Activated CD8-positive, alpha-beta memory T cell treated with anti-CD3 and anti-CD28 coated beads, Interleukin-2, amount 10 ng/mL, durations not matched to agents 7 days and 5 days (primary cell): ENCODE measurements at regions of chr1 and their contacts with region 1.

Region 1: GRCh38 chr1:109773146-109773899 is 9.6 kb upstream of the EPS8L3 start:
- DNase-seq: peak; percentile 87
- ATAC-seq: peak; percentile 88
- H3K4me3 Mint-ChIP-seq: no peak overlapping the region
- H3K27ac Mint-ChIP-seq: no peak overlapping the region
- H3K4me1 Mint-ChIP-seq: peaks cover 8% of the 10 kb centered on the region
- H3K27me3 Mint-ChIP-seq: peaks cover 3% of the 10 kb centered on the region

Region 2: GRCh38 chr1:109598655-109599054 is 174.7 kb before region 1 on chr1:
- CTCF ChIA-PET with region 1: no interaction called
- DNase-seq: no peak
- ATAC-seq: no peak
- H3K4me3 Mint-ChIP-seq: no peak overlapping the region
- H3K27ac Mint-ChIP-seq: no peak overlapping the region
- H3K4me1 Mint-ChIP-seq: no peaks in the 10 kb centered on the region
- H3K27me3 Mint-ChIP-seq: no peaks in the 10 kb centered on the region

Region 3: DNA sequence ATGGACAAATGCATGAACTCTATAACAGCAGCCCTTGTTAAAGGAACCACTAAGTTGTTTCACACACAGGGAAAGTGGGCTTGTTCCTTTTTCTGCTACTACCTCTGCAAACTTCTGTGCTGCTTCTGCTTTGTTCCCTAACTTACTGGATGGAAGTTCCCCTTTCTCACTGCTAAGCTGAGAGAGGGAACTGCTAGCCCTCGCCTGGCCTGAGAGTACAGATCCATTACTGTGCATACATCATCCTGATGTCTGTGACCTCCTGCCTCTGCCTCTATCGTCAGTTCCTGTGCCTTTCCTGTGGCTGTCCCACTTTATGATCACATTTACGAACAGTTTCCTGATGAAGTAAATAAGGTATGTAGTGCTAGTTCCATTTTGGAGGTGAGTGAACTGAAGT is 157.4 kb before region 1 on chr1:
- CTCF ChIA-PET with region 1: no interaction called
- DNase-seq: no peak
- ATAC-seq: no peak
- H3K4me3 Mint-ChIP-seq: no peak overlapping the region
- H3K27ac Mint-ChIP-seq: no peak overlapping the region
- H3K4me1 Mint-ChIP-seq: peaks cover 32% of the 10 kb centered on the region
- H3K27me3 Mint-ChIP-seq: no peaks in the 10 kb centered on the region

Region 4: GRCh38 chr1:109649491-109649914 is 123.8 kb before region 1 on chr1:
- CTCF ChIA-PET with region 1: interaction called, 269 read pairs
- DNase-seq: peak; percentile 21
- ATAC-seq: no peak
- H3K4me3 Mint-ChIP-seq: no peak overlapping the region
- H3K27ac Mint-ChIP-seq: no peak overlapping the region
- H3K4me1 Mint-ChIP-seq: peaks cover 7% of the 10 kb centered on the region
- H3K27me3 Mint-ChIP-seq: peaks cover 40% of the 10 kb centered on the region

Region 5: GRCh38 chr1:109821831-109822745 is 48.8 kb after region 1 on chr1:
- CTCF ChIA-PET with region 1: interaction called, 11 read pairs
- DNase-seq: no peak
- ATAC-seq: no peak
- H3K4me3 Mint-ChIP-seq: no peak overlapping the region
- H3K27ac Mint-ChIP-seq: peak overlapping the region; percentile 87
- H3K4me1 Mint-ChIP-seq: peaks cover 82% of the 10 kb centered on the region
- H3K27me3 Mint-ChIP-seq: no peaks in the 10 kb centered on the region

Region 6: DNA sequence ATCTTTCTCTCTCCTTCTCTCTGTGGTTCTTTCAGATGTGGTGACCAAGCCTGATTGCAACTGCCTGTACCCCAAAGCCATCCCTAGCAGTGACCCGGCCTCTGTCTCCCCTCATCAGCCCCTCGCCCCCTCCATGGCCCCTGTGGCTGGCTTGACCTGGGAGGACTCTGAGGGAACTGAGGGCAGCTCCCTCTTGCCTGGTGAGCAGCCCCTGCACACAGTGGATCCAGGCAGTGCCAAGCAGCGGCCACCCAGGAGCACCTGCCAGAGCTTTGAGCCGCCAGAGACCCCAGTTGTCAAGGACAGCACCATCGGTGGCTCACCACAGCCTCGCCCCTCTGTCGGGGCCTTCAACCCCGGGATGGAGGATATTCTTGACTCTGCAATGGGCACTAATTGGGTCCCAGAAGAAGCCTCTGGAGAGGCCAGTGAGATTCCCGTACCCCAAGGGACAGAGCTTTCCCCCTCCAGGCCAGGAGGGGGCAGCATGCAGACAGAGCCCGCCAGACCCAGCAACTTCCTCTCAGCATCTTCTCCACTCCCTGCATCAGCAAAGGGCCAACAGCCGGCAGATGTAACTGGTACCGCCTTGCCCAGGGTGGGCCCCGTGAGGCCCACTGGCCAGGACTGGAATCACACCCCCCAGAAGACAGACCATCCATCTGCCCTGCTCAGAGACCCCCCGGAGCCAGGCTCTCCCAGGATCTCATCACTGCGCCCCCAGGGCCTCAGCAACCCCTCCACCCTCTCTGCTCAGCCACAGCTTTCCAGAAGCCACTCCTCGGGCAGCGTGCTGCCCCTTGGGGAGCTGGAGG is 150.0 kb after region 1 on chr1:
- CTCF ChIA-PET with region 1: interaction called, 14 read pairs
- DNase-seq: no peak
- ATAC-seq: peak; percentile 37
- H3K4me3 Mint-ChIP-seq: no peak overlapping the region
- H3K27ac Mint-ChIP-seq: peak overlapping the region; percentile 10
- H3K4me1 Mint-ChIP-seq: peaks cover 20% of the 10 kb centered on the region
- H3K27me3 Mint-ChIP-seq: no peaks in the 10 kb centered on the region

Region 7: DNA sequence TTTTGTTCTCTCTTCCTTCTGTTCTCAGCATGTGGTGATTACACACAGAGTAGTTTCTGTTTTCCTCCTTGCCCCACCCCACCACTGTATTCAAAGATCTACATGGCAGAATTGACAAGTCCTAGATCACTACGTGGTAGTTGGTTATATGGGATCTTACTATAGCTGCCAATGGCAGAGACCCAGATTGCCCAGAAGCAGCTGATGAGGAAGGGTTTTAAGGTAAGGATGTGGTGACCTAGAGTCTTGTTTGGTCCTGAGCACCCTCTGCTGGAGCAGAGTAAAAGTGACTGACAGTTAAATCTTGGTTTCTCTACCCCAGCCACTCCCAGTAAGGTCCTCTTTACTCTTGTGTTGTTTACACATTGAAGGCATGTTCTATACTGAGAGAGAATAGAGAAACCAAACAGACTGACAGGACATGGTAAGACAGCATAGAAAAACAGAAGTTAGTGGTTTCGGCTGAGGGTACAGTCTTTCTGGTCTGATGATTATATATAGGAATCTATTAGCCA is 238.3 kb after region 1 on chr1:
- CTCF ChIA-PET with region 1: interaction called, 12 read pairs
- DNase-seq: peak; percentile 62
- ATAC-seq: peak; percentile 97
- H3K4me3 Mint-ChIP-seq: no peak overlapping the region
- H3K27ac Mint-ChIP-seq: peak overlapping the region; percentile 65
- H3K4me1 Mint-ChIP-seq: peaks cover 4% of the 10 kb centered on the region
- H3K27me3 Mint-ChIP-seq: no peaks in the 10 kb centered on the region